Right cardiac atrium (tissue), 5 donors: ENCODE measurements at regions of chr10 and their contacts with region 1.

Region 1: GRCh38 chr10:70549962-70550458 is 52.5 kb downstream of the PRF1 start:
- DNase-seq: peak; percentile 58 to 86 (median 67)
- ATAC-seq: peak; percentile 61 to 71
- H3K4me3 ChIP-seq: no peak overlapping the region
- H3K27ac ChIP-seq: no peak overlapping the region
- H3K4me1 ChIP-seq: no peaks in the 10 kb centered on the region
- H3K27me3 ChIP-seq: no peaks in the 10 kb centered on the region

Region 2: DNA sequence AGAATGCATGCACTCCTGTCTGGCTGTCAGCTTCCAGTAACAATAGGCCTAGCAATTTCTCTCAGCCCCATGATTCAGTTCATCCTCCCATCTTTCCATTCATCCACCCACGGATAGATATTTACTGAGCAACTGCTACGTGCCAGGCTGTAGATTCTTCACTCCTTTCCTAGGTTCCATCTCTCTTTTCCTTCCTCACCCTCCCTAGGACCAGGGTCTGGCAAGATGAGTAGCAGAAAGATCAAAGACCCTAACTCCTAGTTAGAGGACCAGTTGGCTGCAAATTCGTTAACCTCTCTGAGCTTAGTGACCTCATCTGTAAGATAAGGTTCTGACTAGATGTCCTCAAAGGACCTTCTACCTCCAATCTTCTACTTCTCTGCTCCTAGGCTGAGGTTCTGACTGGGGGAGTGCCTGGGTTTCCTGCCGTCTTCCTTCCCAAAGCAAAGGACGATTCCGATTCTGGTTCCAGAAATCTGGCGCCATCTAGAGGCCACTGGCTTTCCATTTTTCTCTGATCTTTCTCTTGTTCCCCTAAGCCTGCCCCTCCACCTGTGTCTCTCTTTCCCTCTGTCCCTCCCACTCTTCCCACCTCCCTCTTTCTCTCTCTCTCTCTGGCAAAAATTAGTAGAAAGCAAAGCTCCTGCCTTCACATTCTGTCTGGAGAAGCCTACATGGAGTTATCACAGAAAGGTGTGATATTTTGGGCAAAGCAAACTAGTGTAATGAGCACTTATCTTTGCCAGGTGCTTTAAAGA is 208.9 kb after region 1 on chr10:
- intact Hi-C with region 1: loop called (anchors 2 kb)
- DNase-seq: peak; percentile 68 to 79 (median 78)
- ATAC-seq: peak; percentile 58 to 67
- H3K4me3 ChIP-seq: no peak overlapping the region
- H3K27ac ChIP-seq: no peak overlapping the region
- H3K4me1 ChIP-seq: no peaks in the 10 kb centered on the region
- H3K27me3 ChIP-seq: no peaks in the 10 kb centered on the region

Region 3: GRCh38 chr10:70880077-70880534 is 330.1 kb after region 1 on chr10:
- intact Hi-C with region 1: loop called (anchors 5 kb)
- DNase-seq: peak; percentile 73 to 88 (median 82)
- ATAC-seq: peak; percentile 82 to 85
- H3K4me3 ChIP-seq: no peak overlapping the region
- H3K27ac ChIP-seq: no peak overlapping the region
- H3K4me1 ChIP-seq: no peaks in the 10 kb centered on the region
- H3K27me3 ChIP-seq: no peaks in the 10 kb centered on the region